ENCODE measurements at regions of chr18 and their contacts with region 1.

Region 1: GRCh38 chr18:212780-213179 is 54.4 kb downstream of the USP14 start:
- DNase-seq: no peak
- ATAC-seq: no peak
- H3K4me3 ChIP-seq: no peak overlapping the region
- H3K27ac ChIP-seq: no peak overlapping the region
- H3K4me1 ChIP-seq: no peaks in the 10 kb centered on the region
- H3K27me3 ChIP-seq: no peaks in the 10 kb centered on the region
- CTCF ChIP-seq: no peak

Region 2: DNA sequence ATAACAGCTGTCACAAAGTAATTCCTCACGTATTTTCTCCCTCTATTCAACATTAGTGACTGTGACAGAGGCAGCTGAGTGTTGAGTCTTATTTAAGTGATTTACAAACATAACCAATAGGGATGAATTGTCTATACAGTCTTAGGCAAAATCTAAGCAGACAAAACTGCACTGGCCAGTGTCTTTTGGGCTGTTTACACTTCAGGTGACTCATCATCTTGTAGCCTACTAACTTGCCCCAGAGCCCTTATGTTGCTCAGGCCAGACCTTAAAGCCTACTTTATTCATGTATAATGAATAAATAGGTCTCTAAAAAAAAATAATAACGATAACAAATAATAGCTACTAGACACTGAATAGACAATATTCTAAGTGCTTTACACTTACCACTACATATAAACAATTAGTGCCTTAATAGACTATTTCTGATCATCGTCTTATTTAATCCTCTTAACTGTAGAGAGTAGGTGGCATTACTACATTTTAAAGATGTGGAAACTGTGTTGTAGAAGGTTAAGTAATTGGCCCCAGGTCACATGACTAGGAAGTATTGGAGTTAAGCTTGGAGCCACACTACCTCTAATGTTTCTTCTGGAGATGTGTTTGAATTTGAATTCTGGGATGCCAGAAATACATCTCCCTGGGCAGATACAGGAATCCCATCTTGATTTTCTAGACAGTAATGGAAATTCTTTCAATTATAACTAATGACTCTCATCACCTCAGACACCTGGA is 38.1 kb after region 1 on chr18:
- intact Hi-C with region 1: loop called in 1 of 10 experiments (anchors 5 kb)
- DNase-seq: no peak
- ATAC-seq: no peak
- H3K4me3 ChIP-seq: no peak overlapping the region
- H3K27ac ChIP-seq: no peak overlapping the region
- H3K4me1 ChIP-seq: no peaks in the 10 kb centered on the region
- H3K27me3 ChIP-seq: no peaks in the 10 kb centered on the region
- CTCF ChIP-seq: no peak

Measured in heart right ventricle (tissue), 16 donors.